CD4-positive, alpha-beta memory T cell (primary cell): ENCODE measurements at regions of chr2 and their contacts with region 1.

Region 1: DNA sequence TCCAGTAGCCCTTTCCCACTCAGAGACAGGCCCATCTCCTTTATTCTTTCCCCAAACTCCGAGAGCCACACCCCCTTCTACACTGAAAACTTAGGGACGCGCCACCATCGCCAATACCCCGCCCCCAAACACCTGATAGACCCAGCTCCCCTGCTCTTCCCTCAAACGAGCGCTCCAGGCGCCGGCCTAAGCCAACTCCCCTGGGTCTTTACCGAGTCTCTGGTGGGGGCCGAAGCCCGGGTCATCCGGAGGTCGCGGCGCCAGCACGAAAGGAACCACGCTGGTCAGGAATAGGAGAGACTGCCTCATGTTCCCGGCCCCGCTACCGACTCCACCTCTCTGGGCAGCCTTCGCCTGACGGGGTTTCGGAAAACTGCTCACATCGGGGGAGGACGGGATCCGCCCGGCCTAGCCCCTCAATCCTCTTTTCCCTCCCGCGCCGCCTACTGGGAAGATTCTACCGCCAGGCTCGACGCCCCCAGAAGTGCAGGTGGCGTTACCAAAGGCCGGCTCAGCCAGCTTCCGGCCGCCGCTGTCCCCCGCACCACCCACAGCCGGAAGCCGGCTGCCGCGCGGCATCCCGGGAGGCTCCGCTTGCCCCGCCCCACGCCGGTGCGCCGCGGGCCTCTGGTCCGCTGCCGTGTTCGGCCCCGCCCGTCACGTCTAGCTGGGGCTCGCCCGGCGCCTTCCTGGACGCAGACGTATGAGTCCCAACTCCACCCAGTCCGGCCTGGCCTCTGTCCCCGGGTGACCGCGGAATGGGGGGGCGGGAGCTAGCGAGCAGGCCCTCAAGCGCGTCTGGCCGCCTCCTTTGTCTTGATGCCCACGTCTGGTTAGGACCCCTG is at the start of gene ADAM17:
- DNase-seq: peak; percentile 81 to 85 (median 82)
- H3K4me3 ChIP-seq: peak within 1 kb of the TSS; percentile 97 to 99
- H3K4me3 Mint-ChIP-seq: peak within 1 kb of the TSS; percentile 92 to 99 (median 98)
- H3K27ac ChIP-seq: peak within 1 kb of the TSS; percentile 90
- H3K27ac Mint-ChIP-seq: peak within 1 kb of the TSS; percentile 93 to 98 (median 98)
- H3K4me1 ChIP-seq: peaks cover 54% of the 10 kb centered on the region
- H3K4me1 Mint-ChIP-seq: peaks cover 32 to 56% (median 45%) of the 10 kb centered on the region in 4 donors
- H3K27me3 ChIP-seq: no peaks in the 10 kb centered on the region
- H3K27me3 Mint-ChIP-seq: no peaks in the 10 kb centered on the region
- total RNA-seq, gene ADAM17: 32.7 to 35.6 TPM

Region 2: DNA sequence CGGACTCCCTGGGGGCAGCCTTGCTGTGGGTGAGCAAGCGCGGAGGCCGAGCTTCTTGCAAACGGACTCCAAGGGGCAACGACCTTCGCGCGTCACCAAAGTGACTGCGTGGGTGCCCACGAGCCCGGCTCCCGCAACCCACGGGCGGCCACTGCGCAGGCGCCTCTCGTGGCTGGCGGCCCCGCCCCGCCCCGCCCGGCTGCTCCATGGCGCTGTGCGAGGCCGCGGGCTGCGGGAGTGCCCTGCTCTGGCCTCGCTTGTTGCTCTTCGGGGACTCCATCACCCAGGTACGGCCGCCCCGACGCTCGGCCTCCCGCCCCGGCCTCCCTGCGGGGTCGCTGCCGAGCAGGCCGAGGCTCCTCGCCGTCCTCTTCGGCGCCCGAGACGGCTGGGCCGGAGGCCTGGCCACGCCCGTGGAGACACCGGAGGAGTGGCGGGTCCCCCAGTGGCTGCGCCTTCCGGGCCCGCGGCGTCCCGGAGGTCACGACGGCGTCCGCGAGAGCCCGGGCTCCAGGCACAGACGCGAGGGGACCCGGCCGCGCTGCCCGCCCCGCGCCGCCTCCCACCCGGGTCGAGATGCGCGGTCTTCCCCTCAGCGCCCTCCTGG is 81.1 kb before region 1 on chr2 and contains the start of gene IAH1:
- CTCF ChIA-PET with region 1: interaction called, 5 read pairs
- POLR2A ChIA-PET with region 1: interaction called, 37 read pairs
- intact Hi-C with region 1: loop called (anchors 2 kb)
- DNase-seq: peak; percentile 78 to 82 (median 80)
- H3K4me3 ChIP-seq: peak within 1 kb of the TSS; percentile 11 to 86
- H3K4me3 Mint-ChIP-seq: peak within 1 kb of the TSS; percentile 83 to 91 (median 86)
- H3K27ac ChIP-seq: peak within 1 kb of the TSS; percentile 83
- H3K27ac Mint-ChIP-seq: peak within 1 kb of the TSS; percentile 80 to 95 (median 94)
- H3K4me1 ChIP-seq: peaks cover 52% of the 10 kb centered on the region
- H3K4me1 Mint-ChIP-seq: peaks cover 28 to 59% (median 45%) of the 10 kb centered on the region in 4 donors
- H3K27me3 ChIP-seq: no peaks in the 10 kb centered on the region
- H3K27me3 Mint-ChIP-seq: no peaks in the 10 kb centered on the region
- total RNA-seq, gene IAH1: 52.5 to 58.1 TPM

Region 3: DNA sequence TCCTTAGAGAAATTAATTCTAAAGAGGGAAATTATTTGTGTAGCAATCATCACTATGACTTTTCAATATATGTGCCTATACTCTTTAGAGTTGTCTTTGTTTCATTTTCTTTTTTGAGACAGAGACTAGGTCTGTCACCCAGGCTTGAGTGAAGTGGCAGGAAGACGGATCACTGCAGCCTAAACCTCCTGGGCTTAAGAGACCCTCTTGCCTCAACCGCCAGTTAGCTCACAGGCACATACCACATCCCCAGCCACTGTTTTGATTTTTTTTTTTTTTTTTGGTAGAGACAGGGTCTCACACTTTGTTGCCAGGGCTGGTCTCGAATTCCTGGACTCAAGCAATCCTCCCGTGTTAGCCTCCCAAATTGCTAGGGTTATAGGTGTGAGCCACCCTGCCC is 62.9 kb after region 1 on chr2:
- CTCF ChIA-PET with region 1: no interaction called
- POLR2A ChIA-PET with region 1: interaction called, 10 read pairs
- intact Hi-C with region 1: no loop called
- DNase-seq: peak; percentile 30 to 62 (median 40)
- H3K4me3 ChIP-seq: no peak overlapping the region
- H3K4me3 Mint-ChIP-seq: peak overlapping the region; percentile 75 to 90 (median 84)
- H3K27ac ChIP-seq: peak overlapping the region; percentile 56
- H3K27ac Mint-ChIP-seq: peak overlapping the region; percentile 80 to 96 (median 94)
- H3K4me1 ChIP-seq: peaks cover 82% of the 10 kb centered on the region
- H3K4me1 Mint-ChIP-seq: peaks cover 74 to 99% (median 87%) of the 10 kb centered on the region in 4 donors
- H3K27me3 ChIP-seq: no peaks in the 10 kb centered on the region
- H3K27me3 Mint-ChIP-seq: no peaks in the 10 kb centered on the region

Region 4: DNA sequence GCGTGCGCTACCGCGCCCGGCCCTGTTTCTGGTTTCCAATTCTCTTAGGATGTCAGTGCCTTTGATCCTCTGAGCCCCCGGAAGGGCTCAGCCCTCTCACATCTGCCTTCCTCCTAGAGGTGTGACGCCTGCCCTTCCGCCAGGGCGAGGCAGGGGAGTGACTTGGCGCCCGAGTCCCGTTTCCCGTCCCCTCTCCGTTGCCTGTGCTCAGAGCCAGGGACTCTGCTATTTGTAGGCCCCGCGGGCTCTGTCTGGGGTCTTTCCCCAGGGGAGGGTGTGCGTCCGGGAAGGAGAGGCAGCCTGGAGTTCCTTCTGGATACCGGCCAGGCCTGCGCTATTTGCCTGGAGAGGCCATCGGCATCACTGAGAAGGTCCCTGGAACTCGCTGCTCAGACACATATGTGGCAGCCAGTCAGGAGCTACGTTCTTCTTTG is 184.0 kb after region 1 on chr2:
- CTCF ChIA-PET with region 1: interaction called, 5 read pairs
- POLR2A ChIA-PET with region 1: interaction called, 11 read pairs
- intact Hi-C with region 1: no loop called
- DNase-seq: peak; percentile 48 to 70 (median 54)
- H3K4me3 ChIP-seq: peak overlapping the region in 1 of 2 donors; percentile 27
- H3K4me3 Mint-ChIP-seq: peak overlapping the region; percentile 73 to 97 (median 87)
- H3K27ac ChIP-seq: peak overlapping the region; percentile 62
- H3K27ac Mint-ChIP-seq: peak overlapping the region; percentile 87 to 99 (median 96)
- H3K4me1 ChIP-seq: peaks cover 49% of the 10 kb centered on the region
- H3K4me1 Mint-ChIP-seq: peaks cover 34 to 70% (median 48%) of the 10 kb centered on the region in 4 donors
- H3K27me3 ChIP-seq: no peaks in the 10 kb centered on the region
- H3K27me3 Mint-ChIP-seq: no peaks in the 10 kb centered on the region

Region 5: DNA sequence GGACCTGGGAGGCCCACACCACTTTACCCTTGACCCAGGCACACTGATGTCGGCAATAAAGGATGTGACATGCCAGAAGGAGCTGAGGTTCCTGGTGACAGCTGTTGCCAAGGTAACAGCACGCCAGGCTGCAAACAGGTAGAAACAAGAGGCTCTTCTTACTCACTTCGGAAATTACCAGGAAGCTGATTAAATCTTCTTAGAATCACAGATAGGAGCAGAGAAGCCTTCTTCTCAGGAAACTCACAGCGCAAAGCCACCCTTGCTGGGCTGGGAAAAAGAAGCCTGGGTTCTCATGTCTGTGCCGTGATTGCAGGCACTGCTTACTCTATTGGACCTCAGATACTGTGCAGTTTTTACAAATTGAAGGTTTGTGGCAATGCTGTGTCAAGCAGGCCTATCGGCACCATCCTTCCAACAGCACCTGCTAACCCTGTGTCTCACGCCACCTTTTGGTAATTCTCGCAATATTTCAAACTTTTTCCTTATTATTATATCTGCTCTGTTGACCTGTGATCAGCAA is 226.7 kb after region 1 on chr2:
- CTCF ChIA-PET with region 1: interaction called, 13 read pairs
- POLR2A ChIA-PET with region 1: interaction called, 19 read pairs
- intact Hi-C with region 1: loop called (anchors 2 kb)
- DNase-seq: peak; percentile 82 to 94 (median 87)
- H3K4me3 ChIP-seq: peak overlapping the region; percentile 2 to 19
- H3K4me3 Mint-ChIP-seq: peak overlapping the region; percentile 64 to 78 (median 72)
- H3K27ac ChIP-seq: peak overlapping the region; percentile 89
- H3K27ac Mint-ChIP-seq: peak overlapping the region; percentile 95 to 100 (median 99)
- H3K4me1 ChIP-seq: peaks cover 58% of the 10 kb centered on the region
- H3K4me1 Mint-ChIP-seq: peaks cover 38 to 79% (median 60%) of the 10 kb centered on the region in 4 donors
- H3K27me3 ChIP-seq: no peaks in the 10 kb centered on the region
- H3K27me3 Mint-ChIP-seq: no peaks in the 10 kb centered on the region

Region 6: GRCh38 chr2:9951272-9951972 is 395.9 kb after region 1 on chr2 and contains the start of gene GRHL1:
- CTCF ChIA-PET with region 1: no interaction called
- POLR2A ChIA-PET with region 1: no interaction called
- intact Hi-C with region 1: loop called (anchors 2 kb)
- DNase-seq: peak; percentile 85 to 92 (median 91)
- H3K4me3 ChIP-seq: peak within 1 kb of the TSS in 1 of 2 donors; percentile 58
- H3K4me3 Mint-ChIP-seq: peak within 1 kb of the TSS; percentile 80 to 91 (median 88)
- H3K27ac ChIP-seq: peak within 1 kb of the TSS; percentile 51
- H3K27ac Mint-ChIP-seq: peak within 1 kb of the TSS; percentile 15 to 73 (median 61)
- H3K4me1 ChIP-seq: peaks cover 13% of the 10 kb centered on the region
- H3K4me1 Mint-ChIP-seq: peaks cover 0 to 5% (median 4%) of the 10 kb centered on the region in 4 donors
- H3K27me3 ChIP-seq: no peaks in the 10 kb centered on the region
- H3K27me3 Mint-ChIP-seq: peaks cover 7 to 16% of the 10 kb centered on the region in 2 donors
- total RNA-seq, gene GRHL1: 0.33 to 0.49 TPM